ENCODE measurements at regions of chrX and their contacts with region 1.

Region 1: DNA sequence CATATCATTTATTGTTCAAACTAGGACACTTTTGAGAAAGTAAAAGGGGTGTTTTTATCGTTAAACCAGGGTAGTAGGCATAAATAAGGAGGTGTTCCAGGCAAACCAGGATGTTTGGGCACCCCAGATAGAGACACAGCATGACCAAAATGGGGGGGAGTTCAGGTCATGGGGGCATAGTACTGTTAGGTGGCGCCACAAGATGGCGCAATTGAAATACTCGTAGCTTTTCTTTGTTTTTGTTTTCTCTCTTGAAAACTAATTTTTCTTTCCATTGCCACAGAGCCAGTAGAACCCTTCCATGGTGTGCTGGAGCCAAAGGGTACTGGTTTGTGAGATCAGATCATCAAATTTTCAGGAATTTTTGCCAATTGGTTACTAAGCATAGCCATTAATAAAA is 283.4 kb downstream of the BCOR start:
- DNase-seq: no peak
- ATAC-seq: peak; percentile 18

Region 2: GRCh38 chrX:39886282-39886681 is 71.9 kb after region 1 on chrX:
- intact Hi-C with region 1: loop called (anchors 1 kb)
- DNase-seq: no peak
- ATAC-seq: peak; percentile 69

Region 3: GRCh38 chrX:40153335-40154249 is 339.2 kb after region 1 on chrX:
- intact Hi-C with region 1: loop called (anchors 5 kb)
- DNase-seq: peak; percentile 84
- ATAC-seq: peak; percentile 15

Region 4: DNA sequence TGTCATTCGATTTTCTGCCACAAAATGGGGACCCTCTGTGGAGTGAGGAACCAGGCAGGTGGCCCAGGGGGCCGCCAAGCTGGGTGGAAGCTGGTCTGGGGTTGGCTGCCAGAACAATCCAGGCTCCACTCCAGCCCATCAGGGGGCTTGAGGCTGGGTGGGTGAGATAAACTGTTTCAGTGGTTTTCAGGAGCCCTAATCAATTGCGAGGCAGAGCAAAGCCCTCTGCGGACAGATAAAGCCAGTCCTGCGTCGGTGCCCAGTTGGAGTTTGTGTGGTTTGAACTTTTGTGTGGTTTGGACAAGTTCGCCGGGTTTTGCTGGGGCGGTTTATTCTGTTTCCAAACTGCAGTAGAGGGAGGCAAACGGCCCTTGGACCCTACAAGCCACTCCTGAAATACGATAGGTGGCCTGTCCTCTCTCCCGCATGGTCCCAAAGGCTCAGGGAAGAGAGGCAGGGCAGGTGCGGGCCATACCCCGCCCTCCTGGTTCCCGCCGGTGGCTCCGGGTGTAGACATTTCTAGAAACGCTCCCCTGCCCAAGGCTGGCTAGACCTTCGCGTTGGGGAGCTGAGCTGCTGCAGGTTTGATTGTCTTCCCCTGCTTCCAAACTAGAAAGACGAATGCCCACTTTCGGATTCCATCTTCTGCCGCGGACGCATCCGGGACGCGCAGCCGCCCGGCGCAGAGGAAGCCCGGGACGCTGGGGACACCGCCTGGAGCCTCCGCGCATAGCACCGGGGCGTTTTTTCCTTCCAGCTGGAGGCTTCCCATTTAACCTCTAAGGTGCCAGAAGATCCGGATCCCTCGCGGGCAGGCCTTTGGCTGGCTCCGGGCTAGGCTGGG is 452.3 kb after region 1 on chrX:
- intact Hi-C with region 1: loop called (anchors 1 kb)
- DNase-seq: peak; percentile 80
- ATAC-seq: peak; percentile 85

Measured in Right ventricle myocardium inferior (tissue), 1 donor.